ENCODE measurements at regions of chrX and their contacts with region 1.

Region 1: DNA sequence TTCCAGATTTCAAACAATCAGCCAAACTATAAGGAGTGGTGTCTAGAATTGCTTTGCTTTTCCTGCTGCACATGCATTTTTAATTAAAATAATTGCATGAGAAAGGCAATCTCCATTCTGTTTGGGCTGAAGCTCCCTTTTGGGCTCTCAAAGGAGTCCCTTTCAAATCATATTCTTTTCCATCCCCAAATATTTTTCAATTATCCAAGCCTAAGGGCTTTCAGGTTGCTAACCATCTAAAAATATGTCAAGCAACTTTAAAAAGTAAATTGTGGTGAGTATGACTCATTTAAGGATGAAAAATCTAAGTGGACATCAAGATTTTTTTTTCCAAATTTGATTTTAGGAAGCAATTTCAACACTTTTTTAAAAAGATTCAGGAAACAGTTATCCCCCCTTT is 28.4 kb downstream of the PIR start:
- DNase-seq: no peak
- H3K4me3 ChIP-seq: no peak overlapping the region
- H3K27ac ChIP-seq: peak overlapping the region; percentile 22 to 99; a peak in 3 of 4 replicates
- H3K4me1 ChIP-seq: peaks cover 0 to 21% of the 10 kb centered on the region in 2 experiments; a peak in 2 of 4 replicates
- H3K27me3 ChIP-seq: no peaks in the 10 kb centered on the region
- CTCF ChIP-seq: no peak
- EP300 ChIP-seq: peak in 1 of 2 experiments; percentile 52; a peak in 1 of 4 replicates
- RAD21 ChIP-seq: no peak

Region 2: DNA sequence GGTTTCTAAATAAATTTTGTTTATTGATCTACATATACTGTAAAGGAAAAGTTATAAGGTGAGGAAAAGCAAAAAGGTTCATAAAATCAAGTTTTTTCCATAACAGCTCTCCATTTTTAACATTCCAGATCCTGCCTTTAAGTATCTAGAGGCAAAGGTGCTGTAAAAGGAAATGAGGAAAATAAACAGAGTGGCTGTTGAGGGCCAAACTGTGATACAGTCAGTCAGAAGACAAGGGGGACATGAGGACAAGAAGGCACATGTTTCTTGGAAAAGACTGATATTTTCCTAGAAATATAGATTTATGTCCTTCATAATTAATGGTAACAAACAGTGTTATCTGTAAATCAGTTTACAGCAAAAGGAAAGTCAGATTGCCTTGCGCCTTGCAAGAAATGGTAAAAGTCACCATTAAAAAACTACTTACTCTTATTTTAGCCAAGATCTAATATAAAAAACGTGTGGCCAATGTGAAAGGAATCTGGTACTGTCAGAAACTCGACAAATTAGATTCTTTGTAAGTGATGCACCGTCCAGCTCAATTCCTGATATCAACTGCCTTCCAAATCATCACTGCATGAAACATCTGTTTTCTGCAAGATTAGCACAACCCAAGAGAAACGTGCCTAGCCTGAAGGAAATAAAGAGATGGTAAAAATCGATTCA is 46.5 kb before region 1 on chrX:
- CTCF ChIA-PET with region 1: interaction called, 13 read pairs
- POLR2A ChIA-PET with region 1: interaction called, 14 read pairs
- DNase-seq: no peak
- H3K4me3 ChIP-seq: no peak overlapping the region
- H3K27ac ChIP-seq: peak overlapping the region; percentile 59 to 99
- H3K4me1 ChIP-seq: peaks cover 0 to 5% of the 10 kb centered on the region in 2 experiments; a peak in 2 of 4 replicates
- H3K27me3 ChIP-seq: no peaks in the 10 kb centered on the region
- CTCF ChIP-seq: no peak
- EP300 ChIP-seq: peak in 1 of 2 experiments; percentile 92; a peak in 3 of 4 replicates
- RAD21 ChIP-seq: no peak; the same call in 1 of the 2 replicates

Region 3: DNA sequence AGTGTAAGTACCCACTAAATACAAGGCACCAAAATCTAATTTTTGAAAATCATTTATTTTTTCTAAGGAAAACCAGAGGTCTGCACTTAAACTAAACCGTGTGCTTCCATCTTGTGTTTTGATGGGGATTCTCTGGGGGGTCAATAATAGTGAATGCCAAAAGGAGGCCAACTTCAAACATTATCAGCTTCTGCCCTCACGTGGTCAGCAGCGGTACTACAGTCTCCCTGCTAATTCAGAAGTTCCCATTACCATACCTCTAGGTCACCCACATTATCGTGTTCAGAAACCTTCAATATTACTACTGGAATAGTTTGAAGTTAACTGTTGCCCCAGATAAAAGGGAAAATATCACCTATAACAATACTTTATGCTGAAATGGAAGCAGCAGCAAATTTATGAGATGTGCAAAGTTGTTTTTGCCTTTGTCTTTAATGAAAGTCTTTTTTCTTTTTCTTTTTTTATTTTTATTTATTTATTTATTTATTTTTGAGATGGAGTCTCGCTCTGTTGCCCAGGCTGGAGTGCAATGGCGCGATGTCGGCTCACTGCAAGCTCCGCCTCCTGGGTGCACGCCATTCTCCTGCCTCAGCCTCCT is 1230.5 kb after region 1 on chrX:
- CTCF ChIA-PET with region 1: no interaction called
- POLR2A ChIA-PET with region 1: no interaction called
- DNase-seq: peak; percentile 69
- H3K4me3 ChIP-seq: no peak overlapping the region
- H3K27ac ChIP-seq: no peak overlapping the region
- H3K4me1 ChIP-seq: no peaks in the 10 kb centered on the region
- H3K27me3 ChIP-seq: no peaks in the 10 kb centered on the region
- CTCF ChIP-seq: peak; percentile 97
- EP300 ChIP-seq: no peak
- RAD21 ChIP-seq: peak; percentile 81

Measured in SK-N-SH (cell line).